ENCODE measurements at regions of chr3 and their contacts with region 1.

Region 1: DNA sequence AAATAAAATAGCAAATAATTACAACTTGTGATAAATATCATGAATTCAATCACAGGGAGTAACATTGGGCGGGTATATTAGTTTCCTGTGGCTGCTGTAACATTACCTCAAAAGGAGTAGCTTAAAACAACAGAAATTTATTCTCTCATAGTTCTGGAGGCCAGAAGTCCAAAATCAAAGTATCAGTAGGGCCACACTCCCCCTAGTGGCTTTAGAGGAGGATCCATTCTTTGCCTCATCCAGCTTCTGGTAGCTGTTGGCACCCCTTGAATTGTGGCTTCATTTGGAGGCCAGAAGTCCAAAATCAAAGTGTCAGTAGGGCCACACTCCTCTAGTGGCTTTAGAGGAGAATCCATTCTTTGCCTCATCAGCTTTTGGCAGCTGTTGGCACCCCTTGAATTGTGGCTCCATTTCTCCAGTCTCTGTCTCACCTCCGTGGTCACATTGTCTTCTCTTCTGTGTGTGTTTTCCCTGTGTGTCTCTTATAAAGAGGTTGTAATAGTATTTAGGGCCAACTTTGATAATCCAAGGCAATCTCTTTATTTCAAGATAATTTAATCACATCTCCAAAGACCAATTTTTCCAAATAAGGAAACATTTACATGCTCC is 3.1 kb upstream of the CFAP20DC start:
- DNase-seq: no peak
- ATAC-seq: no peak
- H3K4me3 ChIP-seq: no peak overlapping the region
- H3K27ac ChIP-seq: no peak overlapping the region
- H3K4me1 ChIP-seq: peaks cover 7% of the 10 kb centered on the region
- H3K27me3 ChIP-seq: no peaks in the 10 kb centered on the region
- CTCF ChIP-seq: peak; percentile 77

Region 2: DNA sequence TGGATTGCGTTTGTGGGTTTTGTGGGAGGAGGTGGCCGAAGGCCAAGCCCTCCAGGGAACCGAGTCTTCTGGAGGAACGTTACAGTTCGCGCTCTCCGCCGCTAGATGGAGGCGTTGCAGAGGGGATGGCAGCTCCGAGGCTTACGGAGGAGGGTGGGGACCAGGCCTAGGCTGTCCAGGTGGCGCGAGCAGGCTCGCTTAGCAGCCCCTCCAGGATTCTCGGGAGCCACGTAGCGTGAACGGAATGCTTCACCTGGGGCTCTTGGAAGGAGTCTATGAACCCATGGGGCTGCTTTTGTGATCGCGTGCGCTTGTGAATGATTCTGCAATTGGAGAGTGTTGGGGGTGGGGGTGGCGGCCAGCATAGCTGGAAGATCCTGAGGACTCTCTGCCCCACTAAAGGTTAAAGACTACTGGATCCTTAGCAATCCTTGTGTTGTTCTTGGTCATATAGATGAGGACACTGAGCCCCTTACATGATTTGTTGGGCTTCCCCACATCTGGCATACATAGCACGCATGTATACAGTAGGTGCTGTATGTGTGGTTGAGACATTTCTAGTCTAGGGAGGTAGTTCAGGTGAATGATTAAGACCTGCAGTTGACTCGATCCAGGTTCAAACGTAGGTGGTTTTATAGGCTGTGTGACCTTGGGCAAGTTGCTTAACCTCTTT is 412.1 kb before region 1 on chr3:
- CTCF ChIA-PET with region 1: no interaction called
- POLR2A ChIA-PET with region 1: no interaction called
- in situ Hi-C with region 1: no loop called
- intact Hi-C with region 1: loop called (anchors 2 kb)
- DNase-seq: peak; percentile 20
- ATAC-seq: peak; percentile 93
- H3K4me3 ChIP-seq: no peak overlapping the region
- H3K27ac ChIP-seq: no peak overlapping the region
- H3K4me1 ChIP-seq: no peaks in the 10 kb centered on the region
- H3K27me3 ChIP-seq: no peaks in the 10 kb centered on the region
- CTCF ChIP-seq: peak; percentile 88

Region 3: GRCh38 chr3:58994746-58995330 is 58.1 kb before region 1 on chr3:
- CTCF ChIA-PET with region 1: interaction called, 3 read pairs
- POLR2A ChIA-PET with region 1: interaction called, 5 read pairs
- in situ Hi-C with region 1: no loop called
- intact Hi-C with region 1: loop called (anchors 2 kb)
- DNase-seq: no peak
- ATAC-seq: peak; percentile 65; the same call in 1 of the 2 replicates
- H3K4me3 ChIP-seq: no peak overlapping the region
- H3K27ac ChIP-seq: no peak overlapping the region
- H3K4me1 ChIP-seq: no peaks in the 10 kb centered on the region
- H3K27me3 ChIP-seq: no peaks in the 10 kb centered on the region
- CTCF ChIP-seq: peak; percentile 69; the same call in 1 of the 2 replicates